ENCODE measurements at regions of chr4 and their contacts with region 1.

Region 1: DNA sequence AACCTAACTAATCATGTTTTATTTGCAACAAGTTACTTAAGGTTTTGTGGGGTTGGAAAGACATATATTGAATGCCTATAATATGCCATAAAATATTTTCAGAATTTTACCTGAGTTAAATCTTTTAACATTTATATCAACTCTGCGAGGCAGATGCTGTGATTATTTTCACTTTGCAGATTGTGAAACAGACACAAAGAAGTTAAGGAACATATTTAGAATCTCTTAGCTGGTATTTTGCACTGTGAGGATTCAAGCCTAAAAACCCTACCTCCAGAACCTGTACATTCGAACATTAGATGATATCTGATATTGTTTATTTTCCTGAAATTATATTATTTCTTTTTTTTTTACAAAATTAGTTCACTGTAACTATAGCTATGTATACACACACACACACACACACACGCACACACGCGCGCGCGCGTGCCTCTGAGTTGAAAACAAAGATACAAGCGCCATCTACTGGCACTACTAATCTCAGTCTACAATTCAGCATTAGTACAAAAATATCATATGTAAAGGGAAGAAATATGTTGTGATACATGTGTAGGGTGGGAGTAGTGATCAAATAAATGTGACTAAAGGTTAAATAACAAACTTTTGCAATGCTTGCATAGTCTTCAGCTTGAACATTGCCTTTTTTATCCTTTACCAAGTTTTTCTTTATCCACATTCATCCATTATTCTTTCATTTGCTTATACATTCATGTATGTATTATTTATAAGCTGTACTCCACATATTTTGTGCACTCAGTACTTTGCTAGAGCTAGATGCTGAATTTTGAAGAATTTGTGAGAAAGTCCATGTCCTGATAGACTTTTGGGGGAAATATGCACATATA is 61.5 kb downstream of the ANXA10 start:
- DNase-seq: peak; percentile 62
- H3K4me3 ChIP-seq: peak overlapping the region; percentile 14 to 44 (median 39)
- H3K27ac ChIP-seq: no peak overlapping the region
- H3K4me1 ChIP-seq: peaks cover 4% of the 10 kb centered on the region
- H3K27me3 ChIP-seq: no peaks in the 10 kb centered on the region
- CTCF ChIP-seq: peak; percentile 76 to 78

Region 2: GRCh38 chr4:167443841-167444240 is 710.0 kb before region 1 on chr4:
- CTCF ChIA-PET with region 1: no interaction called
- dilution Hi-C with region 1: no loop called
- in situ Hi-C with region 1: no loop called
- intact Hi-C with region 1: loop called (anchors 5 kb)
- DNase-seq: no peak
- H3K4me3 ChIP-seq: no peak overlapping the region
- H3K27ac ChIP-seq: no peak overlapping the region
- H3K4me1 ChIP-seq: no peaks in the 10 kb centered on the region
- H3K27me3 ChIP-seq: peaks cover 3% of the 10 kb centered on the region
- CTCF ChIP-seq: no peak

Region 3: GRCh38 chr4:167868163-167868562 is 285.7 kb before region 1 on chr4:
- CTCF ChIA-PET with region 1: no interaction called
- dilution Hi-C with region 1: no loop called
- in situ Hi-C with region 1: no loop called
- intact Hi-C with region 1: no loop called
- DNase-seq: no peak
- H3K4me3 ChIP-seq: no peak overlapping the region
- H3K27ac ChIP-seq: no peak overlapping the region
- H3K4me1 ChIP-seq: no peaks in the 10 kb centered on the region
- H3K27me3 ChIP-seq: no peaks in the 10 kb centered on the region
- CTCF ChIP-seq: no peak

Region 4: GRCh38 chr4:168028568-168028967 is 125.2 kb before region 1 on chr4:
- CTCF ChIA-PET with region 1: no interaction called
- dilution Hi-C with region 1: no loop called
- in situ Hi-C with region 1: no loop called
- intact Hi-C with region 1: loop called (anchors 1 kb)
- DNase-seq: peak; percentile 35
- H3K4me3 ChIP-seq: no peak overlapping the region
- H3K27ac ChIP-seq: no peak overlapping the region
- H3K4me1 ChIP-seq: no peaks in the 10 kb centered on the region
- H3K27me3 ChIP-seq: no peaks in the 10 kb centered on the region
- CTCF ChIP-seq: peak; percentile 28 to 52